CD4-positive, alpha-beta T cell (primary cell): ENCODE measurements at regions of chr21 and their contacts with region 1.

Region 1: GRCh38 chr21:35051287-35051818 is 2.3 kb upstream of the RUNX1 start:
- DNase-seq: peak; percentile 69 to 94 (median 80)
- ATAC-seq: peak; percentile 46
- H3K4me3 ChIP-seq: no peak overlapping the region
- H3K4me3 Mint-ChIP-seq: peak overlapping the region; percentile 96
- H3K27ac ChIP-seq: peak overlapping the region; percentile 36 to 40
- H3K27ac Mint-ChIP-seq: peak overlapping the region; percentile 97
- H3K4me1 ChIP-seq: peaks cover 37% of the 10 kb centered on the region
- H3K4me1 Mint-ChIP-seq: peaks cover 64% of the 10 kb centered on the region
- H3K27me3 ChIP-seq: no peaks in the 10 kb centered on the region
- H3K27me3 Mint-ChIP-seq: no peaks in the 10 kb centered on the region
- CTCF ChIP-seq: peak; percentile 70

Region 2: DNA sequence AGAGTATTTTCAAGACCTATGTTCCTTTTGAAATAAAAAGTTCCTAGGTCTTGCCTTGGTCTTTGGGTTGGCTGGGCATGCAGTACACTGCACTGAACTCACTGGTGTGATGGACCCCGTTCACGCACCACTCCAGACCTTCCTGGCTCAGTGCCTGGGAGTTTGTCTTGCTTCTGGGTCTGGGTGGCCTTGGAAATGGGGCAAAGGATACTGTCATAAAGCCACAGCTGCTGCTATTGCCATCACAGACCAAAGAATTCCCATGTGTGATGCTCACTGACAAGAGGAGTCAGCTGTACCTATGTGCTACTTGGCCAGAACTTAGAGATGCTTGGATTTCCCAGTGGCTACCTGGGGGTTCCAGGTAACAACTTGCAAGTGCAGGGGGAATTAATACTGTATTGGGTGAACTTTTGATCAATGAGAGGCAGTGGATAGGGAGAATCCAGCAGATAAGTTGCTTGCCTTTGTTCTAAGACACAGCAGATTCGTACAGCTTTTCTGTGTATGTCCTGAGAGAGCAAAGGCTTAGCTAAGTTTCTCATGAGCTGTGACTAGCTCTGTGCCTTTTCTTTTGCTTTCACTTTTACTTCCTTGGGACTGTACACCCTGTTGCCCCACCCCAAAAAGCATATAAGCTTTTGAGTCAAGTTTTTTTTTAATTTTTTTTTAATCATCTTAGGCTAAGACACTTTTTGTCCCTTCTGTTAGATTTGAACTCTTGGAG is 117.6 kb before region 1 on chr21:
- CTCF ChIA-PET with region 1: interaction called, 12 read pairs
- POLR2A ChIA-PET with region 1: interaction called, 16 read pairs
- intact Hi-C with region 1: loop called in 1 of 2 experiments (anchors 2 kb)
- DNase-seq: peak in 7 of 14 experiments; percentile 10 to 89 (median 35)
- ATAC-seq: peak; percentile 86
- H3K4me3 ChIP-seq: peak overlapping the region; percentile 39
- H3K4me3 Mint-ChIP-seq: peak overlapping the region; percentile 86
- H3K27ac ChIP-seq: peak overlapping the region; percentile 75 to 84
- H3K27ac Mint-ChIP-seq: peak overlapping the region; percentile 99
- H3K4me1 ChIP-seq: peaks cover 47% of the 10 kb centered on the region
- H3K4me1 Mint-ChIP-seq: peaks cover 92% of the 10 kb centered on the region
- H3K27me3 ChIP-seq: no peaks in the 10 kb centered on the region
- H3K27me3 Mint-ChIP-seq: no peaks in the 10 kb centered on the region
- CTCF ChIP-seq: no peak

Region 3: GRCh38 chr21:34986561-34987500 is 64.5 kb before region 1 on chr21:
- CTCF ChIA-PET with region 1: interaction called, 6 read pairs
- POLR2A ChIA-PET with region 1: interaction called, 18 read pairs
- intact Hi-C with region 1: loop called (anchors 2 to 5 kb)
- DNase-seq: peak; percentile 37 to 87 (median 64)
- ATAC-seq: peak; percentile 68
- H3K4me3 ChIP-seq: peak overlapping the region; percentile 17
- H3K4me3 Mint-ChIP-seq: peak overlapping the region; percentile 84
- H3K27ac ChIP-seq: peak overlapping the region; percentile 54 to 74
- H3K27ac Mint-ChIP-seq: no peak overlapping the region
- H3K4me1 ChIP-seq: peaks cover 96% of the 10 kb centered on the region
- H3K4me1 Mint-ChIP-seq: peaks cover 93% of the 10 kb centered on the region
- H3K27me3 ChIP-seq: no peaks in the 10 kb centered on the region
- H3K27me3 Mint-ChIP-seq: no peaks in the 10 kb centered on the region
- CTCF ChIP-seq: no peak

Region 4: GRCh38 chr21:35026617-35027562 is 24.5 kb before region 1 on chr21:
- CTCF ChIA-PET with region 1: interaction called, 30 read pairs
- POLR2A ChIA-PET with region 1: interaction called, 227 read pairs
- intact Hi-C with region 1: no loop called
- DNase-seq: peak; percentile 82 to 96 (median 88)
- ATAC-seq: peak; percentile 82
- H3K4me3 ChIP-seq: peak overlapping the region; percentile 44
- H3K4me3 Mint-ChIP-seq: peak overlapping the region; percentile 82
- H3K27ac ChIP-seq: peak overlapping the region; percentile 52 to 89
- H3K27ac Mint-ChIP-seq: peak overlapping the region; percentile 97
- H3K4me1 ChIP-seq: peaks cover 85% of the 10 kb centered on the region
- H3K4me1 Mint-ChIP-seq: peaks cover 95% of the 10 kb centered on the region
- H3K27me3 ChIP-seq: no peaks in the 10 kb centered on the region
- H3K27me3 Mint-ChIP-seq: no peaks in the 10 kb centered on the region
- CTCF ChIP-seq: no peak

Region 5: GRCh38 chr21:35102488-35103371 is 51.4 kb after region 1 on chr21:
- CTCF ChIA-PET with region 1: no interaction called
- POLR2A ChIA-PET with region 1: interaction called, 6 read pairs
- intact Hi-C with region 1: loop called in 1 of 2 experiments (anchors 5 kb)
- DNase-seq: peak in 13 of 14 experiments; percentile 1 to 73 (median 32)
- ATAC-seq: peak; percentile 99
- H3K4me3 ChIP-seq: no peak overlapping the region
- H3K4me3 Mint-ChIP-seq: no peak overlapping the region
- H3K27ac ChIP-seq: peak overlapping the region in 1 of 2 donors; percentile 24
- H3K27ac Mint-ChIP-seq: no peak overlapping the region
- H3K4me1 ChIP-seq: peaks cover 15% of the 10 kb centered on the region
- H3K4me1 Mint-ChIP-seq: no peaks in the 10 kb centered on the region
- H3K27me3 ChIP-seq: no peaks in the 10 kb centered on the region
- H3K27me3 Mint-ChIP-seq: no peaks in the 10 kb centered on the region
- CTCF ChIP-seq: no peak

Region 6: GRCh38 chr21:35400233-35400957 is 349.0 kb after region 1 on chr21:
- CTCF ChIA-PET with region 1: interaction called, 12 read pairs
- POLR2A ChIA-PET with region 1: interaction called, 8 read pairs
- intact Hi-C with region 1: loop called (anchors 1 kb)
- DNase-seq: peak in 12 of 14 experiments; percentile 3 to 81 (median 21)
- ATAC-seq: peak; percentile 92
- H3K4me3 ChIP-seq: no peak overlapping the region
- H3K4me3 Mint-ChIP-seq: no peak overlapping the region
- H3K27ac ChIP-seq: no peak overlapping the region
- H3K27ac Mint-ChIP-seq: no peak overlapping the region
- H3K4me1 ChIP-seq: peaks cover 3% of the 10 kb centered on the region
- H3K4me1 Mint-ChIP-seq: peaks cover 6% of the 10 kb centered on the region
- H3K27me3 ChIP-seq: no peaks in the 10 kb centered on the region
- H3K27me3 Mint-ChIP-seq: no peaks in the 10 kb centered on the region
- CTCF ChIP-seq: peak; percentile 75

Region 7: DNA sequence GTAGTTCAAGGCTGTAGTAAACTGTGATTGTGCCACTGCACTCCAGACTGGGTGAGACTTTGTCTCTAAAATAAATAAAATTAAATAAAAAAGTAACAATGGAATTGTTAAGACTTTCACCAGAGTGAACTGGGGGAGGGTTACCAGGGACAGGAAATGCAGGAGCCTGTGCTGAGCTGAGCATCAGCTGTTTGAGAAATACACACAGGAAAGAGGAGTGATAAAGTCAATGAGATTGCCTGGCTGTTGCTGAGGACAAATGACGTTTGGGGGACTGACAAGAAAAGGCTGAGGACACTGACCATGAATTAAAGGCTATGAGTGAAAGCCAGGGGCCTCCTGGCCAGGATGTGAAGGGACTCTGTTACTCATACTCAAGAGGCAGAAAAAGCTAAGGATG is 782.6 kb after region 1 on chr21:
- CTCF ChIA-PET with region 1: no interaction called
- POLR2A ChIA-PET with region 1: no interaction called
- intact Hi-C with region 1: loop called in 1 of 2 experiments (anchors 10 kb)
- DNase-seq: no peak
- ATAC-seq: no peak
- H3K4me3 ChIP-seq: no peak overlapping the region
- H3K4me3 Mint-ChIP-seq: no peak overlapping the region
- H3K27ac ChIP-seq: no peak overlapping the region
- H3K27ac Mint-ChIP-seq: no peak overlapping the region
- H3K4me1 ChIP-seq: no peaks in the 10 kb centered on the region
- H3K4me1 Mint-ChIP-seq: no peaks in the 10 kb centered on the region
- H3K27me3 ChIP-seq: peaks cover 4 to 8% of the 10 kb centered on the region in 2 experiments
- H3K27me3 Mint-ChIP-seq: peaks cover 14% of the 10 kb centered on the region
- CTCF ChIP-seq: no peak